ENCODE measurements at regions of chr1 and their contacts with region 1.

Region 1: GRCh38 chr1:66725885-66726665 is 26.2 kb upstream of the DYNLT5 start:
- DNase-seq: peak; percentile 14
- H3K4me3 ChIP-seq: no peak overlapping the region
- H3K27ac ChIP-seq: no peak overlapping the region
- H3K4me1 ChIP-seq: peaks cover 8% of the 10 kb centered on the region
- H3K27me3 ChIP-seq: no peaks in the 10 kb centered on the region
- CTCF ChIP-seq: peak; percentile 98

Region 2: GRCh38 chr1:66253330-66253921 is 472.6 kb before region 1 on chr1:
- intact Hi-C with region 1: loop called (anchors 10 kb)
- DNase-seq: no peak
- H3K4me3 ChIP-seq: no peak overlapping the region
- H3K27ac ChIP-seq: no peak overlapping the region
- H3K4me1 ChIP-seq: peaks cover 11% of the 10 kb centered on the region
- H3K27me3 ChIP-seq: no peaks in the 10 kb centered on the region
- CTCF ChIP-seq: peak; percentile 91